GM12878 (cell line): ENCODE measurements at regions of chr6 and their contacts with region 1.

Region 1: DNA sequence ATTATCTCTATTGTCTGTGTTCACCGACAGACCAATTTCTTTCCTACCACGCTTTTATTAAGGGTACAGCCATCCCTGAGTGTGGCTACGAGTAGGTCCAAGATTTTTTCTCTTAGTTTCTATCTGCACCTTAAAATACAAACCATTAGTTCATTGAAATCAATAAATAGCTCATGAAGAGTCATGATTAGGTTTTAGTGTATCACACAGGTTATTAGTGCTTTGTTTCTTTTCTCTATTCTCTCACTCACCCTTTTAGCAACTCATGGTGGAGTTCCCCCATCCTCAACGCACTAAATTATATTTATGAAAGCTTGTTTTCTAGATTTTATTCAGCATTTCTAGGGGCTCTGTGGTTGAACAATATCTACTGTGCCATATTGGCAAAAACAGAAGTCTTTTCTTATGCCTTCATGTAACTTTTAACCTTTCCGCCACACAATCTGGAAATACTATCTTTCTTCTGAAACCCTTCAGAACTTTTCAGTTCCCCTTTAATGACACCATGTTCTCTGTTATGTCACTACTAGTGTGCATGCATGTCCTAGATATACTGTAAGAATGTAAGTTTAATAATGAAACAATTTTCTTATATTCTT is 128.2 kb upstream of the LAMA2 start:
- DNase-seq: peak; percentile 65
- ATAC-seq: peak; percentile 95
- H3K4me3 ChIP-seq: no peak overlapping the region
- H3K27ac ChIP-seq: peak overlapping the region; percentile 50; the same call in 1 of the 2 replicates
- H3K4me1 ChIP-seq: peaks cover 6% of the 10 kb centered on the region; the same call in 1 of the 2 replicates
- H3K27me3 ChIP-seq: no peaks in the 10 kb centered on the region
- CTCF ChIP-seq: no peak
- EP300 ChIP-seq: peak; percentile 93 to 97
- POLR2A ChIP-seq: no peak
- RAD21 ChIP-seq: no peak

Region 2: DNA sequence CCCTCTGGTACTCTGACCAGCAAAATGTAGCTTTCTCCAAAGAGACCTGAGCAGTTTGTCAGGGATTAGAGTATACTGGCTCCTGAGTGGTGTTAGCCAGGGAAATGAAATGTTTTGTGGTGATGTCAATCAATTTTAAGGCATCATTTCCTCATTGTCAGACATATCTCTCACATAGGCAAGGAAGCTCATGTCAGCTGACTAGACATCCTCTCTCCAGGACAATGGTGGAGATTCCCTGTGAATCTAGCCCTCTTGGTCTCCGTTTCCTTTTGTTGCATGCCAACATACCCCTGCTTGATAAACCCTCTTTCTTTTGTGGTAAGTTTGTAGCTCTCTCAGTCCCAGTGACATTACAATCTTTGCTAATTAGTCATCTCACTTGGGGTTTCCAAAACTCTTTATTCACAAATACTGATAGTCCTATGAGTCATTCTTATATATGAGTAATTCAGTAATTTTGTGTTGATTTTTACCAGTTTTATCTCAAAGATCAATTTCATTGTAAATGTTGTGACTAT is 98.7 kb before region 1 on chr6:
- CTCF ChIA-PET with region 1: no interaction called
- POLR2A ChIA-PET with region 1: no interaction called
- RAD21 ChIA-PET with region 1: no interaction called
- SMC1A ChIA-PET with region 1: no interaction called
- in situ Hi-C with region 1: no loop called
- intact Hi-C with region 1: loop called (anchors 2 kb)
- DNase-seq: peak; percentile 33
- ATAC-seq: peak; percentile 90
- H3K4me3 ChIP-seq: no peak overlapping the region
- H3K27ac ChIP-seq: peak overlapping the region; percentile 31; the same call in 1 of the 2 replicates
- H3K4me1 ChIP-seq: no peaks in the 10 kb centered on the region
- H3K27me3 ChIP-seq: no peaks in the 10 kb centered on the region
- CTCF ChIP-seq: no peak
- EP300 ChIP-seq: peak in 1 of 2 experiments; percentile 79; a peak in 1 of 4 replicates
- POLR2A ChIP-seq: no peak
- RAD21 ChIP-seq: no peak

Region 3: GRCh38 chr6:129146902-129147301 is 392.1 kb after region 1 on chr6:
- CTCF ChIA-PET with region 1: no interaction called
- POLR2A ChIA-PET with region 1: no interaction called
- RAD21 ChIA-PET with region 1: no interaction called
- SMC1A ChIA-PET with region 1: no interaction called
- in situ Hi-C with region 1: no loop called
- intact Hi-C with region 1: no loop called
- DNase-seq: no peak
- ATAC-seq: no peak
- H3K4me3 ChIP-seq: no peak overlapping the region
- H3K27ac ChIP-seq: no peak overlapping the region
- H3K4me1 ChIP-seq: no peaks in the 10 kb centered on the region
- H3K27me3 ChIP-seq: no peaks in the 10 kb centered on the region
- CTCF ChIP-seq: no peak
- EP300 ChIP-seq: no peak
- POLR2A ChIP-seq: no peak
- RAD21 ChIP-seq: no peak